CD4-positive, alpha-beta T cell (primary cell): ENCODE measurements at regions of chr16 and their contacts with region 1.

Region 1: DNA sequence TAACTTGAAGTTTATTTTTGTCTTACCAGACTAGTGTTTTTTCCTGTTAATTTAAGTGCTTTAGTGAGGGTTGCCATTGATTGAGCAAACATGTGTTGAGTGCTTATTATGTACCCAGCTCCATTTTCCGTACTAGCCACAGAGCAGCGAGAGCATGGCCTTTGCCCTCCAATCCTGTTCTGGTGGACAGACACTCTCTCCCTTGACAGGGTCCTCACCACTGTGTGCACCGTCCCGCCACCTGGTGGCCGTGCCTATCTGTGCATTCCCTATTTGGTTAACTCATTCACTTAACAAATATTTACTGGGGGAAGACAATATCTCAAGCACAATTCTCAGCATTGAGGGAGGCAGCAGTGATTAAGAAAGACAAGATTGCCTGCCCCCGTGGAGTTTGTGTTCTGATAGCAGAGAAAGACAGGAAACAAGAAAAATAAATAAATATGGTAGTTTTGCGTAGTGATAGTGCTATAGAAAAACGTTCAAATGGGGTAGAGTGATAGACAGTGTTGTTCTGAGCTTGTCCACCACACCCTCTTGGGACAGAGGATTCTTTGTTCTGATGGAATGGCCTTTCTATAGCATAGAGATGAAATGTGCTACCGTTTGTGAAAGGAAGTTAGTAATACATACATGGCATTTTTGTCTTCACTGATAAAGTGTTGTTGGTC is 13.0 kb downstream of the CDH13 start:
- DNase-seq: peak; percentile 15 to 66 (median 34)
- ATAC-seq: no peak
- H3K4me3 ChIP-seq: no peak overlapping the region
- H3K4me3 Mint-ChIP-seq: no peak overlapping the region
- H3K27ac ChIP-seq: no peak overlapping the region
- H3K27ac Mint-ChIP-seq: no peak overlapping the region
- H3K4me1 ChIP-seq: no peaks in the 10 kb centered on the region
- H3K4me1 Mint-ChIP-seq: peaks cover 5% of the 10 kb centered on the region
- H3K27me3 ChIP-seq: no peaks in the 10 kb centered on the region
- H3K27me3 Mint-ChIP-seq: no peaks in the 10 kb centered on the region
- CTCF ChIP-seq: peak; percentile 73

Region 2: GRCh38 chr16:82603784-82604411 is 35.9 kb before region 1 on chr16:
- CTCF ChIA-PET with region 1: no interaction called
- POLR2A ChIA-PET with region 1: no interaction called
- intact Hi-C with region 1: no loop called
- DNase-seq: peak in 1 of 14 experiments; percentile 6
- ATAC-seq: no peak
- H3K4me3 ChIP-seq: no peak overlapping the region
- H3K4me3 Mint-ChIP-seq: no peak overlapping the region
- H3K27ac ChIP-seq: no peak overlapping the region
- H3K27ac Mint-ChIP-seq: no peak overlapping the region
- H3K4me1 ChIP-seq: no peaks in the 10 kb centered on the region
- H3K4me1 Mint-ChIP-seq: no peaks in the 10 kb centered on the region
- H3K27me3 ChIP-seq: peaks cover 0 to 3% of the 10 kb centered on the region in 2 experiments
- H3K27me3 Mint-ChIP-seq: peaks cover 8% of the 10 kb centered on the region
- CTCF ChIP-seq: no peak

Region 3: DNA sequence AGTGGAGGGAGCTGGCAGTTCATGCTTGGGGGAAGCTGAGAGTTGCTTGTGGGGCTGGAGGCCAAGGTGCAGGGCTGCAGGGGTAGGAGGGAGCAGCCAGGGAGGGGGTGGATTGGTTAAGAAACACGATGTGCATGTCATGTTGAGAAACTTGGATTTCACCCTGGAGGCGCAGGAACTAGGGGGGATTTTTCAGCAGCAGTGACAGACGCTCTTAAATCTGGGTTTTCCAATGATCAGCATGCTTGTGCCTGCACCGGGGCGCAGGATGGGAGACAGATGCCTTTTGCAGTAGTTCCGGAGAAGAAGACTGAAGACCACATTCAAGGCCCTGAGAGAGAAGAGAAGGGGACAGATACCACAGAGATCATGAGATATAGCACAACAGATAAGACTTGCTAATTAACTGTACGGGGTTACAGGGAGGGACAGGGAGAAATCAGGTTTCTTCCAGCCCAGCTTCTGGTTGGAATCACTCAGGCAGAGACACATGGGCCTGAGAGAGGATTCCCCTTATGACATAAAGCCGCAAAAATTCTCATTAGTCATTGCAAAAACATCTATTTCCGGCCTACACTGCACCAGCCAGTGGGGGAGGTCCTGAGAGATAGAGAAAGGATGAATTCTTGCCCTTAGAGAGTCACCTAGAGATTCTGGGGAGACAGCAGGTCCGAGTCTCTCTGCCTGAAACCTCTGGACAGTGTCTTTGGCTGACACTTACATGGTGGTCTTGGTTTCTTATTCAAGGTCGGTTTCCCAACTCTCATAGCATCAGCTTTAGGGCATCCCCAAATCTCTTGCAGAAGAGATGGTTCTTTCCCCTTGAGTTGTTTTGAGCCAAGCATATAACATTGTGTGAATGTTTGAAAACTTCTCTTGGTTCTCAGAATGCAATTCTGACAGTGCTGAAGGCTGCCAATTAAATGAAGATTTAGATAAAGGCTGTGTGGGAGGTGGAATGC is 14.0 kb after region 1 on chr16:
- CTCF ChIA-PET with region 1: interaction called, 4 read pairs
- POLR2A ChIA-PET with region 1: interaction called, 12 read pairs
- intact Hi-C with region 1: no loop called
- DNase-seq: peak in 13 of 14 experiments; percentile 5 to 83 (median 28)
- ATAC-seq: peak; percentile 62
- H3K4me3 ChIP-seq: no peak overlapping the region
- H3K4me3 Mint-ChIP-seq: peak overlapping the region; percentile 52
- H3K27ac ChIP-seq: peak overlapping the region; percentile 71 to 80
- H3K27ac Mint-ChIP-seq: peak overlapping the region; percentile 86
- H3K4me1 ChIP-seq: peaks cover 77% of the 10 kb centered on the region
- H3K4me1 Mint-ChIP-seq: peaks cover 99% of the 10 kb centered on the region
- H3K27me3 ChIP-seq: no peaks in the 10 kb centered on the region
- H3K27me3 Mint-ChIP-seq: no peaks in the 10 kb centered on the region
- CTCF ChIP-seq: no peak